ENCODE measurements at regions of chr9 and their contacts with region 1.

Region 1: DNA sequence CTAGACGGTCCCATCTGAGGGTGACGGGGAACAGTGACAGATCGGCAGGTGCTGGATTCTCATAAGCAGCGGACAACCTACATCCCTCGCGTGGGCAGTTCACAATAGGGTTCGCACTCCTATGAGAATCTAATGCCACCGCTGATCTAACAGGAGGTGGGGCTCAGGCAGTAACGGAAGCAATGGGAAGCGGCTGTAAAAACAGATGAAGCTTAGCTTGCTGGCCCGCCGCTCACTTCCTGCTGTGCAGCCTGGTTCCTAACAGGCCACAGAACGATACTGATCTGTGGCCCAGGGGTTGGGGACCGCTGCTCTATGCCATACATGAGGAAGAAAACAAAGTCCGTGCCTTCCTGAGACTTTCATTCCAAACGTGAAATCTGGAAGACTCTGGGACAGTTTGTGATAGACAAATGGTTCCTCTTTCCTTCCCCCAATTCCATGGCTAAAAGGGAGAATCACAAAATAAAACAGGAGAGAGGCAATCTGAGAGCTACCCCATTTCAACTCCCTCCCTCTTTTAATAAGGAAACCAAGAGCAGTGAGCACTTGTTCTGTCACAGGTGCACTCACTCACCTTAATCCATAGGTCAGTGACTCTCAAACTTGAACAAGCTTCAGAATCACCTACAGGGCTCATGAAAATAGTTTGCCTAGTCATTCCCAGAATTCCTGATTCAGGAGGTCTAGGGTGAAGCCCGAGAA is 12.1 kb downstream of the PDCL start:
- DNase-seq: peak; percentile 49
- ATAC-seq: peak; percentile 61
- H3K4me3 ChIP-seq: peak overlapping the region in 3 of 5 experiments; percentile 17 to 20 (median 17)
- H3K4me3 Mint-ChIP-seq: peak overlapping the region; percentile 62
- H3K27ac ChIP-seq: peak overlapping the region; percentile 1 to 76
- H3K27ac Mint-ChIP-seq: peak overlapping the region; percentile 81
- H3K4me1 ChIP-seq: peaks cover 18 to 22% of the 10 kb centered on the region in 2 donors
- H3K4me1 Mint-ChIP-seq: peaks cover 22% of the 10 kb centered on the region
- H3K27me3 ChIP-seq: no peaks in the 10 kb centered on the region
- H3K27me3 Mint-ChIP-seq: no peaks in the 10 kb centered on the region
- CTCF ChIP-seq: no peak

Region 2: GRCh38 chr9:122827761-122828093 is 11.4 kb after region 1 on chr9:
- CTCF ChIA-PET with region 1: interaction called, 4 read pairs
- POLR2A ChIA-PET with region 1: interaction called, 3 read pairs
- intact Hi-C with region 1: loop called (anchors 1 kb)
- DNase-seq: no peak
- ATAC-seq: peak; percentile 1
- H3K4me3 ChIP-seq: peak overlapping the region; percentile 74 to 98 (median 77)
- H3K4me3 Mint-ChIP-seq: peak overlapping the region; percentile 92
- H3K27ac ChIP-seq: peak overlapping the region; percentile 82 to 85
- H3K27ac Mint-ChIP-seq: peak overlapping the region; percentile 88
- H3K4me1 ChIP-seq: peaks cover 8 to 20% of the 10 kb centered on the region in 2 donors
- H3K4me1 Mint-ChIP-seq: peaks cover 31% of the 10 kb centered on the region
- H3K27me3 ChIP-seq: no peaks in the 10 kb centered on the region
- H3K27me3 Mint-ChIP-seq: no peaks in the 10 kb centered on the region
- CTCF ChIP-seq: no peak

Region 3: DNA sequence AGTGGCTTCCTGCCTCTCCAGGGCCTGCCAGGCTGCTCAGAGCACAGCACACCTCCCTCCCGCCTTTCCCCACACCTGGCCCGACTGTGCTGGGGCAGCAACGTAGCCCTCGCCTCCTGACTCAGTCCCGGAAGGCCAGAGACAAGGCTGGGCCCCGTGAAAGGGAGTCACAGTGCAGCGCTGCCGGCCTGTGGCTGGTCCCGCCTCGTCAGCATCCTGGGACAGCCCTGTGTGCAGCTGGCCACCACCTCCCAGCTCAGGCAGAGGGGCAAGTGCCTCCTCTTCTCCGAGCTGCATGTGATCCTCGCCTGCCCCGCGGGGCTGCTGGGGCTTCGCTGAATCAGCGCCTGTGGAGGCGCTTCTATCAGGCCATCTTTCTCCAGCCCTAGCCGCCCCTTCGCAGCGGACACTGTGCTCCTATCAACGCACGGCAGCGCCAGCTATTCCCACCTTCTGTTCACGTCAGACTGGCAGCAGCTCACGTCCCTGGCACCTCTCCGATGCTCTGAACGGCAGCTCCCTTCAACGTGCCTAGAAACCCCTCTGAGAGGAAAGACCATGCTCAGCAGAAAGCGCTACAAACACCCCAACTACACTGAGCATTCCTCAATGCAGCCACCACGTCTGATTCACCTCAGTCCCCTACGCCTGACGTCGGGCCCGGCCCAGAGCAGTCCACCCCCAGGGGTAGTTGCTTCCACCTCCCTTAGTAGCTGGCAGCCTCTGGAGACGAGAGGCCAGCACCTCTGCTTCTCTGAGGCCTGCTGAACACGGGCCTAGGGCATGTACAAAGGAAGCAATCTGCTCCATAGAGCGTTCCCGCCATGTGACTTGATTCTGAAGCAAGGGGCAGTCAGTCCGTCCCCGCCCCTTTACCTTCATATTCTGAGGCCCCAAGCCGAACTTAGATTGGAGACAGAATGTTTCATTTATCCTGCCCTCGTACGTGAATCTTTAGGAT is 296.0 kb after region 1 on chr9:
- CTCF ChIA-PET with region 1: no interaction called
- POLR2A ChIA-PET with region 1: no interaction called
- intact Hi-C with region 1: no loop called
- DNase-seq: no peak
- ATAC-seq: peak; percentile 45
- H3K4me3 ChIP-seq: no peak overlapping the region
- H3K4me3 Mint-ChIP-seq: no peak overlapping the region
- H3K27ac ChIP-seq: peak overlapping the region; percentile 11 to 67
- H3K27ac Mint-ChIP-seq: peak overlapping the region; percentile 85
- H3K4me1 ChIP-seq: peaks cover 0 to 9% of the 10 kb centered on the region in 2 donors
- H3K4me1 Mint-ChIP-seq: peaks cover 7% of the 10 kb centered on the region
- H3K27me3 ChIP-seq: no peaks in the 10 kb centered on the region
- H3K27me3 Mint-ChIP-seq: no peaks in the 10 kb centered on the region
- CTCF ChIP-seq: no peak